GM13976 (cell line): ENCODE measurements at regions of chr16 and their contacts with region 1.

Region 1: GRCh38 chr16:20383106-20384029 is 21.2 kb downstream of the PDILT start:
- DNase-seq: peak; percentile 61
- CTCF ChIP-seq: peak; percentile 74

Region 2: DNA sequence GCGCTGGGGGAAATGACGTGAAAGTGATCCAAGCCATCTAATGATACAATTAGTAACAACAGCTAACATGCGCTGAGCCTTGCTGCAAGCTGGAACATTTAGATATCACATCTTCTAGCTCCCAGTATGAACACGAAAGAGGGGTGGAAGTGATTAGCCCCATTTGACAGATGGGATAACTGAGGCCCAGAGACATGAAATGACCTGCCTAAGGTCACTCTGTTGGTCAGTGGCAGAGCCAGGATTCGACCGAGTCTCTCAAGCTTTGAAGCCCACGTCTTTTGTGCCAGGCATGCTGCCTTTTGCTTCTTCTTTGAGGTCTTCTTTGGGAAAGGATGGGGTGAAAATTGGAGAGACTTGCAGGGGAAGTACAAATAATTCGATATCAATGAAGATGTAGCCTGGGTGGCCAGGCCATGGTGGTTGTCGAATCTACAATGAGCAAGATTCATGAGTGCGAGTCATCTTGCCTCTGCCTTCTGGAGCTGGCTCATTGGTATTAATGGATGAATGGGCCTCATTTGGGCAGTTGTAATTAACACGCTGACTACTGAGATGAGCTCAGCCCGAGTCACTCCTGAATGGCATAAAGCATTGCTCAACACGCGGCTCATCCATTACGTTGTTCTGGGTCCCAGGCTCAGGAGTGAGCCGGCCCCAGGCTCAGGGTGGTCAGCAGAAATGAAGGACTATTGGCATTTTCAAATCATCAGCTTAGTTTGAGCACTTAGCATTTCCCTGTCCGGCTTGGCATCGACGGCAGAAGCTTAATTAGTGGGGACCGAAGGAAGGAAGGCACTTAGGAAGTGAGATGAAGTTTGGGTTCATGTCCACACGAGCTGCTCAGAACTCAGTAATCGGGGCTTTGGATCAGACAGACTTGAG is 470.7 kb before region 1 on chr16:
- in situ Hi-C with region 1: loop called (anchors 10 kb)
- DNase-seq: no peak
- CTCF ChIP-seq: no peak

Region 3: DNA sequence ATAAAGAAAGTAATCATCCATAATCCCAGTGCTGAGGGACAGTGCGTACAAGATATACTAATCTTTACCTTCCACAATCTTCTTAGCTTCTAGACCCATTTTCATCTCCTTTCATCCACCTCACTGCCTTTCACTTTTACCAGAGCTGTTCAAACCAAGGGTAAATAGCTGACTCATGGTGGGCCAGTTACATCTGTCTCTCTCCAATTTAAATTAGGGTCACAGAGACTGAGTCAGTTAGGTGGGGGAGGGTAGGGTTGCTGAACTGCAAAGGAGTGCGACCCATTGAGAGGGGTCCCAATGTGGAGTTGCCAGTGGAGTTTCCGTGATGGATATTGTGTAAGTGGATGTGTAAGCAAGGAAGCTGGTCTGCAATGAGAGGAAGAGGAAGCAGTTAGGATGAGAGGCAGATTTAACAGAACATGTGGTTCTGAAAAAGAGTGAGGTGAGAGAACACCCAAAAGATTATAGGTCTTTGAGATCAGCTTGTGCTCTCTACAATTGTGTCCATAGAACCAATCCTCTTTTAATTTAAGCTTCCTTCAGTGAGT is 139.6 kb before region 1 on chr16:
- in situ Hi-C with region 1: no loop called
- DNase-seq: no peak
- CTCF ChIP-seq: no peak

Region 4: GRCh38 chr16:20747030-20747816 is 363.9 kb after region 1 on chr16:
- in situ Hi-C with region 1: no loop called
- DNase-seq: no peak
- CTCF ChIP-seq: no peak